ENCODE measurements at regions of chr7 and their contacts with region 1.

Region 1: GRCh38 chr7:64999165-65000004 is 7.1 kb downstream of the ERV3-1 start:
- DNase-seq: no peak

Region 2: DNA sequence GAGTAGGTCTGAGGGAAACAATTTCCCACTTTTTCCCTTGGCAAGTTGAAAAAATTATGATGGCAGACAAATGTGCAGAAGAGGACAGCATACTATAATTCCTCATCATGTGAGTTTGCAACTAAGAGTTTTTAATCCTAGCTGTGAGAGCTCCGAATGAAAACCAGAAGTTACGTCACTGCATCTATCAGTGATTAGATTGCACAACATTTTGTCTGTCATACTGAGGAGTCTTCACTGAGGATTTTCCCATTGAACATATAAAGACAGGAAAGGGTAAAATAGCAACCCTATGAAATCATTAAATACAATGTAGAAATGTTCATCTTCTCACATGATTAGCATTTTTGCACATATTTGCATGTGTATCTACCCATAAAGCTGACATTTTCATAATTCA is 639.8 kb before region 1 on chr7:
- intact Hi-C with region 1: no loop called
- DNase-seq: no peak

Region 3: DNA sequence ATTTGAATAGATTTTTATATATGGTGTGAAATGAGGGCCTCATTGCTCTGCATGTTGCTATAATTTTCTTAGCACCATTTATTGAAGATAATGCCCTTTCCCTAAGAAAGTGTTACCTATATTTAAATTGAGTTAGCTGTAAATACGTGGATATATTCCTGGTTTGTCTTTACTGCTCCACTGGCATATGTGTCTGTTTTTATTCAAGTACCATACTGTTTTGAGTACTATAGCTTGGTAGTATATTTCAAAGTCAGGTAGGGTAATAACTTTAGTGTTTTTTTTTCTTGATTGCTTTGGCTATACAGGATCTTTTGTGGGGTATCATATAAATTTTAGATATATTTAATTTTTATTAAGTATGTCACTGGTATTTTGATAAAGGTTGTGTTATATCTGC is 64.9 kb before region 1 on chr7:
- intact Hi-C with region 1: no loop called
- DNase-seq: no peak

Region 4: DNA sequence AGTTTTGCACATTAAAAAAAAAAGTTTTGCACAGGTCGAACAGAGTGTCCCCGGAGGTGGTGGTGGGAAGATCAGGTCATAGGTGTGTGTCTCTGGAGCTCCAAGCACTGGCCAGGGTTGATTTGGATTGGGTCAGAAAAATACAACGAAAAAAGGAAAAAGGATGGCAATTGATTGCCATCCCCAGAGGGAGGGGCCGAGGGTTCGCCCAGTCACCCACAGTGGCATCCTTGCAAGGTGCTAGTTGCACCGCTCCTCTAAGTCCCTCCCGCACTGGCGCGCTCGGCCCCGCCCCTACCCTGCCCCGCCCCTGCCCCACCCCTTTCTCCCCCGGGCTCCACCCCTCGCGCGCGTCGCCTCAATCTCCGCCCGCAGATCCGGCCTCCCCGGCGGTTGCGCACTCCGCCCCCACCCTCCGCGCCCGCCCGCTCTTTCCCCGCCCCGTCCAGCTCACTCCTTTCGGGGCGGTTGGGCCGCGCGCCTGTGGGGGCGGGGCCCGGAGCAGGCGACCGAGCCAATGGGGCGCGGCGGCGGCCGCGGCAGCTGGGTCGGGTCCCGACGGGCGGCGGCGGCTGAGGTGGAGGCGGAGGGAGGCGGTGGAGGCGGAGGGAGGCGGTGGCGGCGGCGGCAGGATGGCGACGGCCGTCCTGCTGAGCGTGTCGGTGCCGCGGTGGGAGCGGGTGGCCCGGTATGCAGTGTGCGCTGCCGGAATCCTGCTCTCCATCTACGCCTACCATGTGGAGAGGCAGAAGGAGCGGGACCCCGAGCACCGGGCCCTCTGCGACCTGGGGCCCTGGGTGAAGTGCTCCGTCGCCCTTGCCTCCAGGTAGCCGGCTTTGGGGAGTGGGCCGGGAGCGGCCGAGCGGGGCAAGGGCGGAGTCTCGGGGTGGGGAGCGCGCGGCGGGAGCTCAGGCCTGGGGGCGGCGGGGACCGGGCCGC is 38.6 kb after region 1 on chr7:
- intact Hi-C with region 1: loop called (anchors 5 kb)
- DNase-seq: peak; percentile 97

Measured in cardiac septum (tissue), 1 donor.